SK-N-SH (cell line): ENCODE measurements at regions of chr7 and their contacts with region 1.

Region 1: GRCh38 chr7:79298145-79298760 is 155.2 kb downstream of the MAGI2 start:
- DNase-seq: peak; percentile 55
- H3K4me3 ChIP-seq: no peak overlapping the region
- H3K27ac ChIP-seq: no peak overlapping the region
- H3K4me1 ChIP-seq: no peaks in the 10 kb centered on the region; a peak in 1 of 4 replicates
- H3K27me3 ChIP-seq: no peaks in the 10 kb centered on the region
- CTCF ChIP-seq: peak; percentile 97
- EP300 ChIP-seq: no peak
- RAD21 ChIP-seq: peak; percentile 92

Region 2: GRCh38 chr7:79282063-79282694 is 16.1 kb before region 1 on chr7:
- CTCF ChIA-PET with region 1: interaction called, 33 read pairs
- POLR2A ChIA-PET with region 1: no interaction called
- DNase-seq: peak; percentile 9
- H3K4me3 ChIP-seq: peak overlapping the region in 1 of 2 experiments; percentile 7; a peak in 2 of 4 replicates
- H3K27ac ChIP-seq: peak overlapping the region; percentile 48 to 72; a peak in 3 of 4 replicates
- H3K4me1 ChIP-seq: peaks cover 6 to 32% of the 10 kb centered on the region in 2 experiments
- H3K27me3 ChIP-seq: no peaks in the 10 kb centered on the region
- CTCF ChIP-seq: peak; percentile 66
- EP300 ChIP-seq: no peak
- RAD21 ChIP-seq: peak; percentile 69

Region 3: GRCh38 chr7:79317728-79318127 is 19.5 kb after region 1 on chr7:
- CTCF ChIA-PET with region 1: interaction called, 13 read pairs
- POLR2A ChIA-PET with region 1: no interaction called
- DNase-seq: no peak
- H3K4me3 ChIP-seq: no peak overlapping the region
- H3K27ac ChIP-seq: peak overlapping the region; percentile 29 to 40; a peak in 3 of 4 replicates
- H3K4me1 ChIP-seq: peaks cover 2 to 4% of the 10 kb centered on the region in 2 experiments; a peak in 2 of 4 replicates
- H3K27me3 ChIP-seq: no peaks in the 10 kb centered on the region
- CTCF ChIP-seq: no peak
- EP300 ChIP-seq: peak in 1 of 2 experiments; percentile 29; a peak in 1 of 4 replicates
- RAD21 ChIP-seq: no peak

Region 4: GRCh38 chr7:79452032-79452494 is 153.8 kb after region 1 on chr7:
- CTCF ChIA-PET with region 1: interaction called, 15 read pairs
- POLR2A ChIA-PET with region 1: interaction called, 3 read pairs
- DNase-seq: peak; percentile 91
- H3K4me3 ChIP-seq: peak overlapping the region; percentile 66 to 82
- H3K27ac ChIP-seq: peak overlapping the region; percentile 88 to 96
- H3K4me1 ChIP-seq: peaks cover 0 to 27% of the 10 kb centered on the region in 2 experiments; a peak in 2 of 4 replicates
- H3K27me3 ChIP-seq: no peaks in the 10 kb centered on the region
- CTCF ChIP-seq: no peak
- EP300 ChIP-seq: peak in 1 of 2 experiments; percentile 32; a peak in 2 of 4 replicates
- RAD21 ChIP-seq: peak; percentile 1; the same call in 1 of the 2 replicates

Region 5: GRCh38 chr7:80018941-80019752 is 720.9 kb after region 1 on chr7:
- CTCF ChIA-PET with region 1: interaction called, 14 read pairs
- POLR2A ChIA-PET with region 1: no interaction called
- DNase-seq: peak; percentile 80
- H3K4me3 ChIP-seq: no peak overlapping the region
- H3K27ac ChIP-seq: peak overlapping the region in 1 of 2 experiments; percentile 23; a peak in 1 of 4 replicates
- H3K4me1 ChIP-seq: peaks cover 0 to 2% of the 10 kb centered on the region in 2 experiments; a peak in 2 of 4 replicates
- H3K27me3 ChIP-seq: no peaks in the 10 kb centered on the region
- CTCF ChIP-seq: peak; percentile 100
- EP300 ChIP-seq: no peak
- RAD21 ChIP-seq: peak; percentile 95

Region 6: GRCh38 chr7:80047856-80048459 is 749.7 kb after region 1 on chr7:
- CTCF ChIA-PET with region 1: interaction called, 92 read pairs
- POLR2A ChIA-PET with region 1: no interaction called
- DNase-seq: peak; percentile 39
- H3K4me3 ChIP-seq: no peak overlapping the region
- H3K27ac ChIP-seq: no peak overlapping the region
- H3K4me1 ChIP-seq: no peaks in the 10 kb centered on the region
- H3K27me3 ChIP-seq: no peaks in the 10 kb centered on the region
- CTCF ChIP-seq: peak; percentile 89
- EP300 ChIP-seq: no peak
- RAD21 ChIP-seq: peak; percentile 70